ENCODE measurements at regions of chr1 and their contacts with region 1.

Region 1: GRCh38 chr1:204363335-204364124 is 3.8 kb upstream of the PLEKHA6 start:
- DNase-seq: peak; percentile 56 to 90 (median 64)
- ATAC-seq: peak; percentile 97
- H3K4me3 ChIP-seq: peak overlapping the region; percentile 61
- H3K4me3 Mint-ChIP-seq: peak overlapping the region; percentile 26
- H3K27ac ChIP-seq: no peak overlapping the region
- H3K27ac Mint-ChIP-seq: no peak overlapping the region
- H3K4me1 ChIP-seq: peaks cover 20% of the 10 kb centered on the region
- H3K4me1 Mint-ChIP-seq: peaks cover 5% of the 10 kb centered on the region
- H3K27me3 ChIP-seq: peaks cover 0 to 5% of the 10 kb centered on the region in 2 experiments
- H3K27me3 Mint-ChIP-seq: peaks cover 9% of the 10 kb centered on the region
- CTCF ChIP-seq: peak; percentile 96

Region 2: GRCh38 chr1:203504397-203505250 is 858.9 kb before region 1 on chr1:
- CTCF ChIA-PET with region 1: no interaction called
- POLR2A ChIA-PET with region 1: no interaction called
- intact Hi-C with region 1: loop called in 1 of 2 experiments (anchors 10 kb)
- DNase-seq: peak; percentile 50 to 89 (median 72)
- ATAC-seq: peak; percentile 65
- H3K4me3 ChIP-seq: no peak overlapping the region
- H3K4me3 Mint-ChIP-seq: no peak overlapping the region
- H3K27ac ChIP-seq: no peak overlapping the region
- H3K27ac Mint-ChIP-seq: no peak overlapping the region
- H3K4me1 ChIP-seq: peaks cover 5% of the 10 kb centered on the region
- H3K4me1 Mint-ChIP-seq: peaks cover 6% of the 10 kb centered on the region
- H3K27me3 ChIP-seq: no peaks in the 10 kb centered on the region
- H3K27me3 Mint-ChIP-seq: no peaks in the 10 kb centered on the region
- CTCF ChIP-seq: peak; percentile 81

Region 3: DNA sequence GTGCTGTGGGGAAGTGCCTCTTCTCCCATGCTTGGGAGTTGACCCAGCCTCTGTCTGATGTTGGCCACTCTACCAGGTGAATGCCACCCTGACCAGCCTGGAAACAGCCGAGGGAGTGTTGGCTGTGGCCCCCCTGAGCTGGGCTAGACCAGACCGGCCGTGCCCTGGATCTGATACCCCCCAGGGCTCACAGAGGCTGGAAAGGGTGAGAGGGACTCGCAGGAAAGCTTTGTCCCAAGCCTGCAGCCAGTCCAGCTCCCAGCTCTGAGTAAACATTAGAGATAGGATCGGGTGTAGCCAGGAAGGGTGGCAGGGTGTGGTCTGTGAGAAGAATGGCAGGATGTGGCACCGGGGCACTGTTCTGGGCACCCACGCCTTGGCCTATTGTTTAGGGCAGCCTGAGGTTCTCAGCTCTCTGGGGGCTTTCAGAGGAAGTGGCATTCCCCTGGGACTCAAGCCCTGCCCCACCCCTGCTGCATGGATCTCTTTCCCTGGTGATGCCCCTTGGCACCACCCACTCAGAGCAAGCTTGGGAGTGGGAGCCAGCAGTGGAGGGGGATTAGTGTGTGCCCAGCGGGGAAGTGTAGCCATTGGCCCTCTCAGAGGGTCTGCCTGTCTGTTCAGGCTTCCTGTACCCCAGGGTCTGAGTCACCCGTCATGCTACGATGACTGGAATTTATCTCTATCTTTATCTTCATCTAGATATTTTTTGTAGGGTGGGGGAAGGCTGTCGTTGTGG is 259.2 kb before region 1 on chr1:
- CTCF ChIA-PET with region 1: no interaction called
- POLR2A ChIA-PET with region 1: no interaction called
- intact Hi-C with region 1: no loop called
- DNase-seq: peak in 3 of 14 experiments; percentile 30 to 67 (median 34)
- ATAC-seq: peak; percentile 52
- H3K4me3 ChIP-seq: no peak overlapping the region
- H3K4me3 Mint-ChIP-seq: no peak overlapping the region
- H3K27ac ChIP-seq: peak overlapping the region in 1 of 2 donors; percentile 83
- H3K27ac Mint-ChIP-seq: peak overlapping the region; percentile 69
- H3K4me1 ChIP-seq: peaks cover 43% of the 10 kb centered on the region
- H3K4me1 Mint-ChIP-seq: peaks cover 25% of the 10 kb centered on the region
- H3K27me3 ChIP-seq: no peaks in the 10 kb centered on the region
- H3K27me3 Mint-ChIP-seq: peaks cover 6% of the 10 kb centered on the region
- CTCF ChIP-seq: no peak

Region 4: GRCh38 chr1:204162231-204163074 is 201.1 kb before region 1 on chr1:
- CTCF ChIA-PET with region 1: interaction called, 14 read pairs
- POLR2A ChIA-PET with region 1: interaction called, 7 read pairs
- intact Hi-C with region 1: loop called (anchors 1 kb)
- DNase-seq: peak; percentile 60 to 86 (median 72)
- ATAC-seq: peak; percentile 98
- H3K4me3 ChIP-seq: no peak overlapping the region
- H3K4me3 Mint-ChIP-seq: no peak overlapping the region
- H3K27ac ChIP-seq: no peak overlapping the region
- H3K27ac Mint-ChIP-seq: no peak overlapping the region
- H3K4me1 ChIP-seq: no peaks in the 10 kb centered on the region
- H3K4me1 Mint-ChIP-seq: no peaks in the 10 kb centered on the region
- H3K27me3 ChIP-seq: no peaks in the 10 kb centered on the region
- H3K27me3 Mint-ChIP-seq: peaks cover 18% of the 10 kb centered on the region
- CTCF ChIP-seq: peak; percentile 99

Region 5: GRCh38 chr1:204207136-204207616 is 156.4 kb before region 1 on chr1:
- CTCF ChIA-PET with region 1: interaction called, 5 read pairs
- POLR2A ChIA-PET with region 1: no interaction called
- intact Hi-C with region 1: loop called in 1 of 2 experiments (anchors 5 kb)
- DNase-seq: peak; percentile 51 to 80 (median 66)
- ATAC-seq: peak; percentile 98
- H3K4me3 ChIP-seq: no peak overlapping the region
- H3K4me3 Mint-ChIP-seq: no peak overlapping the region
- H3K27ac ChIP-seq: no peak overlapping the region
- H3K27ac Mint-ChIP-seq: no peak overlapping the region
- H3K4me1 ChIP-seq: peaks cover 7% of the 10 kb centered on the region
- H3K4me1 Mint-ChIP-seq: peaks cover 18% of the 10 kb centered on the region
- H3K27me3 ChIP-seq: peaks cover 5 to 14% of the 10 kb centered on the region in 2 experiments
- H3K27me3 Mint-ChIP-seq: peaks cover 57% of the 10 kb centered on the region
- CTCF ChIP-seq: peak; percentile 86

Region 6: DNA sequence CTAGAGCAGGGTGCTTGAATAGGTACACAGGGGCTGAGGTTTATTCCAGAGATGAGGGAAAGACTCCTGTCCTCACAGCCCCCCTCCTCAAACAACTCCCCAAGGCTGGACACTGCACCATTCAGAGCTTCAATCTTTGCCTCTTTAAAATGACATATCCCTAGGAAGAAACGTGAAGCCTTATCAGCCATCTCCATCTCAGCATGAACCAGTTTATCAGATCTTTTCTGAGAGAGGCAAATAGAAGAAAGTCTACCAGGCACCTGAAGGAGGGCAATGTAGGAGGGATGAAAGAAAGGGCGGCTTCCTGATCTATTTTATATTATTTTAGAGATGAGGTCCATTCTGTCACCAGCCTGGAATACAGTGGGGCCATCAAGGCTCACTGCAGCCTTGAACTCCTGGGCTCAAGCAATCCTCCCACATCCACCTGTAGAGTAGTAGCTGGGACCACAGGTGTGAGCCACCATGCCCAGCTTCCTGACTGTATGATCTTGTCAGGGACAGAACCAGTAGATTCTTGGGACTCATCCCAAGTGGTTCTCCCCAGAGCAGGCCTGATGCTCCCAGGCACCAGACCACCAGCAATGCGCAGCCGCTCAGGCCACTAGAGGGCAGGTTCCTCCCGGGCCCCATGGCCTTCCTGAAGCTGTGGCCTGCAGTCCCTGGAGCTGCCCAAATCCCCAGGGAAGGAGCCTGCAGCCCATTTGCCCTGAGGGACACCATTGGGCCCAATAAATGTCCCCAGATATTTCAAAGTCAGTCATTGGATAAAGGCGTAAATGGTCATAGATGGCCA is 105.4 kb before region 1 on chr1:
- CTCF ChIA-PET with region 1: no interaction called
- POLR2A ChIA-PET with region 1: no interaction called
- intact Hi-C with region 1: loop called in 1 of 2 experiments (anchors 1 kb)
- DNase-seq: peak in 9 of 14 experiments; percentile 2 to 43 (median 19)
- ATAC-seq: no peak
- H3K4me3 ChIP-seq: no peak overlapping the region
- H3K4me3 Mint-ChIP-seq: no peak overlapping the region
- H3K27ac ChIP-seq: no peak overlapping the region
- H3K27ac Mint-ChIP-seq: no peak overlapping the region
- H3K4me1 ChIP-seq: no peaks in the 10 kb centered on the region
- H3K4me1 Mint-ChIP-seq: no peaks in the 10 kb centered on the region
- H3K27me3 ChIP-seq: no peaks in the 10 kb centered on the region
- H3K27me3 Mint-ChIP-seq: no peaks in the 10 kb centered on the region
- CTCF ChIP-seq: peak; percentile 34

Region 7: DNA sequence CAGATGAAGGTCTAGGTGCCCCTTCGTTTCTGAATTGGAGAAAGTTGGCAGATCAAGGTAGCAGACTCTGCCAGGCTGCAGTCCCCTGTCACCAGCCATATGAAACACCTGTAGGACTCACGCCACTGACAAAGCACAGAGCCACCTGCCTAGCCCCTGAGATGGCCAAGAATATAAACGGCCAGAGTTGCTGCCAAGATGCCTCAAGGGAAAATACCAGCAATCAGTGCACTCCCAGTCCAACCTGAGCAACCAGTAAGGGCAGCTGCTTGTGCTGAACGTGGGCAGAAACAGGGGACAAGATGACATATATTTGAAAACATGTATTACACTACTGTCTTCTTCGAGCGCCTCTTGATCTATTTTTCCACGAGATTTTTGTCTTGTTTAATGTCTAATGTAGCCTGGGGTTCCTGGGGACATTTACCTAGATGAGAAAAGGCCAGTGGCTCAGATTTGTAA is 16.9 kb after region 1 on chr1:
- CTCF ChIA-PET with region 1: interaction called, 10 read pairs
- POLR2A ChIA-PET with region 1: interaction called, 3 read pairs
- intact Hi-C with region 1: no loop called
- DNase-seq: no peak
- ATAC-seq: no peak
- H3K4me3 ChIP-seq: no peak overlapping the region
- H3K4me3 Mint-ChIP-seq: peak overlapping the region; percentile 50
- H3K27ac ChIP-seq: no peak overlapping the region
- H3K27ac Mint-ChIP-seq: no peak overlapping the region
- H3K4me1 ChIP-seq: peaks cover 24% of the 10 kb centered on the region
- H3K4me1 Mint-ChIP-seq: peaks cover 8% of the 10 kb centered on the region
- H3K27me3 ChIP-seq: peaks cover 20 to 22% of the 10 kb centered on the region in 2 experiments
- H3K27me3 Mint-ChIP-seq: peaks cover 28% of the 10 kb centered on the region
- CTCF ChIP-seq: no peak

Measured in CD4-positive, alpha-beta T cell (primary cell).